ENCODE measurements at regions of chr4 and their contacts with region 1.

Region 1: DNA sequence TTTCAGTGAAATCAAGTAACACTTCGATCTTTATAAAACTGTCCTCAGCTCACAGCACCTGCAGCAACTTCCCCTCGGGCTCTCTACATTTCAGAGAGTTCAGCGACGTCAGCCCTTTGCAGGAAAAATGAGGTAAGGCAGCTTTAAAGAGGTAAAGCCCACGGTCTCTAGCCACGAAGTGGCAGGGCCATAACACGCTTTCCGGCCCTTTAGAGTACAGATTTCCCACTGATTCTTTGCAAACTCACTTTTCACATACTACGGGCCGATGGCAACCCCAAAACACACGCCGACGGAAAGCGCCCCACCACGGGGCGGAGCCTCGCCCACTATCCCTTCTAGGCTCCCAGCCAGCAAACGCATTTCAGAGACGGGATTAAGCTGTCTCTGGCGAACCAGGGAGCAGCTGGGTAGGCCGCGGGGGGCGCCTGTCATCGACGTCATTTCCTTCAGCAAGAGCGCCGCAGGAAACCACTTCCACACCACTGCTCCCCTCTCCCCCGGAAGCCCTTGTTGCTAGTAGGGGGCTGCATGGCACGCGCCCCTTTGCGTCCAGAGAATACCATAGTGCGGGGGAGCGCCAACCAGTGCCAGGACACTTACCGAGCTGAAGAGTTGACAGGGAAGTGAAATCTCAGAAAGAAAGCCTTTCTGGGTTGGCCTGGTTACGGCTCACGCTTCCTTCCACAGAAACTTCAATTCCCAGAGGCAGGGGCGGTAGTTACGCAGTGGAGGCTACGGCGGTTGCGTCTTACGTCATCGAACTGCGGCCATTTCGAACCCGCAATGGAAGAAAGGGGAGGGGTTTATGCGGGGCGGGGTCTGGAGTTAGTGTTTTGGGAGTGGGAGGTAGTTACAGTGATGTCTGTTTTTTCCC is at the start of gene TRMT10A:
- DNase-seq: peak; percentile 79 to 98 (median 98)
- ATAC-seq: peak; percentile 91
- H3K4me3 ChIP-seq: peak within 1 kb of the TSS; percentile 92
- H3K4me3 Mint-ChIP-seq: peak within 1 kb of the TSS; percentile 77 to 99 (median 98)
- H3K27ac ChIP-seq: peak within 1 kb of the TSS; percentile 91
- H3K27ac Mint-ChIP-seq: peak within 1 kb of the TSS; percentile 98 to 100 (median 100)
- H3K4me1 ChIP-seq: no peaks in the 10 kb centered on the region
- H3K4me1 Mint-ChIP-seq: peaks cover 0 to 33% (median 28%) of the 10 kb centered on the region in 7 donors
- H3K27me3 ChIP-seq: no peaks in the 10 kb centered on the region
- H3K27me3 Mint-ChIP-seq: peaks cover 13 to 29% (median 23%) of the 10 kb centered on the region in 5 donors
- total RNA-seq, gene TRMT10A: 3.9 to 9.1 (median 7.7) TPM

Region 2: DNA sequence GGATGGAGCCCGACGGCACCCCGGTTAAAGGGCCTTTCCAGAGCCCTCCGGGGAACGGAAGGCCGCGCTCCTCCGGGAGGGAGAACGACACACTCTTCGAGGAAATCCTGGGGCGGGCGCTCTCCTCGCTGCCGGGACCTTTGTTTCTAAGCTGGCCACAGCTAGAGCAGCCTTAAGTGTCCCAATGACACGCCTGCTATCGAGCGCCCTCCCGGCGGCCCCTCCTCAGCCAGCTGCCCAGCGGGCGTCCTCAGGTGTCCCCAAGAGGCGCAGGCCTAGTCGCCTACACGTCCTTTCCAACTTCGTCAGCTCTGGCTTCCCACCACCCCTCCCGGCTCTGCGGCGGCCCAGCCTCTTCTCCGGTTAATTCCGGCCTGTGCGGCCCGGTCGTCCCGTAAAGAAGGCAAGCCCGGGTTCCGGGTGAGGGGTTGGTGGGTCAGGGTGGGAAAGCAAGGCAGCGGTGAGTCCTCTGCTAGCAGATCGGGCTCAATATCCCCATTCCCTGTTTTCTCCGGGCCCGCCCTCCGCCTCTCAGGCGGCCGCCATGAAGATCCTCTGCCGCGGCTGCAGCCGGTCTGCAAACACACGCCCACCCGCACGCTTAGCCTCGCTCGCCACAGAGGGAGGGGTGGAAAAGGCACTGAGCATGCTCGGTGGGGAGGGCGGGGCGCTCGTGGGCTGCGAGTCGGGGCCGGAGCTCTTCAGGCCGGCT is 1302.8 kb before region 1 on chr4:
- CTCF ChIA-PET with region 1: no interaction called
- POLR2A ChIA-PET with region 1: no interaction called
- intact Hi-C with region 1: loop called (anchors 1 to 2 kb)
- DNase-seq: peak in 6 of 9 donors; percentile 69 to 95 (median 78)
- ATAC-seq: peak; percentile 85
- H3K4me3 ChIP-seq: peak overlapping the region; percentile 90
- H3K4me3 Mint-ChIP-seq: peak overlapping the region; percentile 92 to 98 (median 94)
- H3K27ac ChIP-seq: peak overlapping the region; percentile 86
- H3K27ac Mint-ChIP-seq: peak overlapping the region; percentile 84 to 97 (median 92)
- H3K4me1 ChIP-seq: peaks cover 5 to 12% of the 10 kb centered on the region in 2 donors
- H3K4me1 Mint-ChIP-seq: peaks cover 31 to 60% (median 54%) of the 10 kb centered on the region in 7 donors
- H3K27me3 ChIP-seq: no peaks in the 10 kb centered on the region
- H3K27me3 Mint-ChIP-seq: no peaks in the 10 kb centered on the region

Region 3: DNA sequence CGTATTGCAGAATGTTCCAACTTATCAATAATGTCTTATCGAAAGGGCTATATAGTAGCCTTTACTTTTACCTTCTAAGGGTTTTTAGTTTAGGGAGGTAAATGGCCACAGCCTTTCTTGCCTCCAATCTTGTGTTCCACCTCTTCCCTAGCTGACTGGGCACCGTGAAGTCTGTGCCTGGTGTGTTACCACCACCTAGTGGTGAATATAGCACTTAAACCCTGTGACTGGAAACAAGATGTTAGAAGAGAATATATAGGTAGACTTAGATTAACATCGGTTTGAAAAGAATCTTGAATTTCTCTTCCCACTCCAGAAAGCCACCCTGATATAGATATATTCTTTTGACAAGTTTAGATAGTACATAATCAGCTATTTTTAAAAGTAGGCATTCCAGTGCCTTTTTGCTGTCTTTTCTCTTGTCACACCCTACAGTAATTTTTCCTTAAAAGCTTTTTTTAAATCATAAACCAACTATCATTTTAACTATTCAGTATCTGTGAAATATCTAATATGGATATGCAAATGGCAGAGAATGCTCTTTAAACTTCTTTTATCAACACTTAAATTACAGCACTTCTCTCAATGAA is 100.6 kb before region 1 on chr4:
- CTCF ChIA-PET with region 1: no interaction called
- POLR2A ChIA-PET with region 1: no interaction called
- intact Hi-C with region 1: loop called in 1 of 2 experiments (anchors 5 kb)
- DNase-seq: peak in 8 of 9 donors; percentile 16 to 62 (median 44)
- ATAC-seq: peak; percentile 82
- H3K4me3 ChIP-seq: no peak overlapping the region
- H3K4me3 Mint-ChIP-seq: no peak overlapping the region
- H3K27ac ChIP-seq: no peak overlapping the region
- H3K27ac Mint-ChIP-seq: no peak overlapping the region
- H3K4me1 ChIP-seq: no peaks in the 10 kb centered on the region
- H3K4me1 Mint-ChIP-seq: no peaks in the 10 kb centered on the region
- H3K27me3 ChIP-seq: no peaks in the 10 kb centered on the region
- H3K27me3 Mint-ChIP-seq: peaks cover 0 to 35% (median 8%) of the 10 kb centered on the region in 5 donors

Region 4: DNA sequence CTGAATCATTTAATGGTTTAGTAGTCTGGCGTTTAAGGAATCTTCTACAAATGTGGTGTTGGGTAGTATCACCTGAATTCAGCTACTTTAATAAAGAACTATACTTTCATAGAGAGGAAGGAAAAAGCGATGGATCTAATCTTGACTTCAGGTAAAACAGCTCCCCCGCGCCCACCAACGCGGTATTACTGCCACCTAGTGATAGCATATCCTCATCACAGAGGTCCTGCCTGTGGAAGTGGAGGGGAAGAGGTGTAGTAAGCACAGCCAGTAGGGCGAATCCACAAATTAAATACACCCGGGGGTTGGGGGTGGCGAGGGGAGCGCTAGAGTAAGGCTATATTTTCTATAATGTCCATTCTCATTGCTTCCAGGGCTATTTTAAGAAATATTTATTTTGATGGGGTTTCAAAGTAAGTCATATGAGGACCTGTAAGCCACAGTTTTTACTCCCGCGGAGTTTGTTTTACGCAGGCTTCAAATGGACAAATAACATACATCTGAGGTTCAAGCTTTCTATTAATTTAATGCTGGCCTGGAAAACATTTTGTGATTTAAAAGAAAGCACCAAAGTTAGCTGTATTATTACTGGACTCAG is 244.8 kb after region 1 on chr4:
- CTCF ChIA-PET with region 1: interaction called, 15 read pairs
- POLR2A ChIA-PET with region 1: interaction called, 10 read pairs
- intact Hi-C with region 1: loop called (anchors 1 kb)
- DNase-seq: peak; percentile 28 to 78 (median 72)
- ATAC-seq: peak; percentile 92
- H3K4me3 ChIP-seq: no peak overlapping the region
- H3K4me3 Mint-ChIP-seq: no peak overlapping the region
- H3K27ac ChIP-seq: no peak overlapping the region
- H3K27ac Mint-ChIP-seq: no peak overlapping the region
- H3K4me1 ChIP-seq: no peaks in the 10 kb centered on the region
- H3K4me1 Mint-ChIP-seq: peaks cover 4 to 10% (median 5%) of the 10 kb centered on the region in 7 donors
- H3K27me3 ChIP-seq: no peaks in the 10 kb centered on the region
- H3K27me3 Mint-ChIP-seq: peaks cover 0 to 17% (median 7%) of the 10 kb centered on the region in 5 donors

Region 5: GRCh38 chr4:99885063-99885664 is 321.6 kb after region 1 on chr4:
- CTCF ChIA-PET with region 1: no interaction called
- POLR2A ChIA-PET with region 1: interaction called, 3 read pairs
- intact Hi-C with region 1: loop called (anchors 1 kb)
- DNase-seq: peak in 7 of 9 donors; percentile 34 to 64 (median 54)
- ATAC-seq: peak; percentile 72
- H3K4me3 ChIP-seq: no peak overlapping the region
- H3K4me3 Mint-ChIP-seq: no peak overlapping the region
- H3K27ac ChIP-seq: no peak overlapping the region
- H3K27ac Mint-ChIP-seq: no peak overlapping the region
- H3K4me1 ChIP-seq: peaks cover 0 to 2% of the 10 kb centered on the region in 2 donors
- H3K4me1 Mint-ChIP-seq: peaks cover 0 to 19% (median 13%) of the 10 kb centered on the region in 7 donors
- H3K27me3 ChIP-seq: no peaks in the 10 kb centered on the region
- H3K27me3 Mint-ChIP-seq: no peaks in the 10 kb centered on the region

Region 6: DNA sequence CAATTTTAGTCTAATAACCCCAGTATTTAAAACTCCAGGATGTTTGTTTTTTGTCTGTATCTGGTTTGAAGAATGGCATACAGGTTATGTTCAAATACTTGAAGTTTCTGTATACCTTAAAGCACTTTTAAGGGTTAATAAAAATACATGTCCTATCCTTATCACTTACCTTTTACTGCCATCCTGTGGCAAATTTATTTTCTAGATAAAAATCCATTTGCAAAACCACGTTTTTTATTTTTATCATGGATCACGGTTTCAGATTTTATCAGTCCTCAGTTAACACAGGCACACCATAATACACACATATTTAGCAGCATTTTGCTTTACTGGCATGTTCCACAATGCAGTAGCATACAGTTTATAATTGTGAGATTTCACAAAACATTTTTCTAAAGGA is 499.8 kb after region 1 on chr4:
- CTCF ChIA-PET with region 1: interaction called, 4 read pairs
- POLR2A ChIA-PET with region 1: no interaction called
- intact Hi-C with region 1: loop called in 1 of 2 experiments (anchors 1 kb)
- DNase-seq: peak in 5 of 9 donors; percentile 4 to 23 (median 5)
- ATAC-seq: no peak
- H3K4me3 ChIP-seq: no peak overlapping the region
- H3K4me3 Mint-ChIP-seq: no peak overlapping the region
- H3K27ac ChIP-seq: no peak overlapping the region
- H3K27ac Mint-ChIP-seq: no peak overlapping the region
- H3K4me1 ChIP-seq: no peaks in the 10 kb centered on the region
- H3K4me1 Mint-ChIP-seq: peaks cover 0 to 6% (median 0%) of the 10 kb centered on the region in 7 donors
- H3K27me3 ChIP-seq: no peaks in the 10 kb centered on the region
- H3K27me3 Mint-ChIP-seq: peaks cover 4 to 33% (median 22%) of the 10 kb centered on the region in 5 donors

Measured in naive thymus-derived CD4-positive, alpha-beta T cell (primary cell).